ENCODE measurements at regions of chr1 and their contacts with region 1.

Region 1: GRCh38 chr1:220810179-220810653 is 23.5 kb downstream of the MTARC1 start:
- DNase-seq: no peak
- H3K4me3 ChIP-seq: peak overlapping the region; percentile 44
- CTCF ChIP-seq: peak; percentile 95

Region 2: DNA sequence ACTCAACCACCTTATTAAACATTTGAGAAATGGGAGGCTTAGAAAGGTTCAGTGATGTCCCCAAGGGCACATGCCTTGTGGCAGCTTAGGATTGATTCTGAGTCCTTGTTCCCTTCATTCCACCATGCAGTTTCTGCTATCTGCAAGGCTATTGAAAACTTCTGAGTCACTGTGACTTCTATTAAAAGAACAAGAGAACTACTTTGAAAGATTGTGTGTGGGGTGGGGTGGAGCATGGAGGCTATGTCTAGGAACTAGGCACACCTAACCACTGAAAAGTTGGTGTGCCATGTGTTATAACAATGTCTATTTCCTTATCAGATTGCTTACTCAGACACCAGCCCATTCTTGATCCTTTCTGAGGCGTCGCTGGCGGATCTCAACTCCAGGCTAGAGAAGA is 12.7 kb before region 1 on chr1:
- CTCF ChIA-PET with region 1: interaction called, 31 read pairs
- POLR2A ChIA-PET with region 1: no interaction called
- DNase-seq: no peak
- H3K4me3 ChIP-seq: no peak overlapping the region
- CTCF ChIP-seq: no peak

Region 3: GRCh38 chr1:220824031-220824989 is 14.1 kb after region 1 on chr1:
- CTCF ChIA-PET with region 1: interaction called, 19 read pairs
- POLR2A ChIA-PET with region 1: no interaction called
- DNase-seq: no peak
- H3K4me3 ChIP-seq: no peak overlapping the region
- CTCF ChIP-seq: no peak

Region 4: GRCh38 chr1:220841293-220841692 is 31.1 kb after region 1 on chr1:
- CTCF ChIA-PET with region 1: interaction called, 10 read pairs
- POLR2A ChIA-PET with region 1: no interaction called
- DNase-seq: no peak
- H3K4me3 ChIP-seq: no peak overlapping the region
- CTCF ChIP-seq: no peak

Region 5: DNA sequence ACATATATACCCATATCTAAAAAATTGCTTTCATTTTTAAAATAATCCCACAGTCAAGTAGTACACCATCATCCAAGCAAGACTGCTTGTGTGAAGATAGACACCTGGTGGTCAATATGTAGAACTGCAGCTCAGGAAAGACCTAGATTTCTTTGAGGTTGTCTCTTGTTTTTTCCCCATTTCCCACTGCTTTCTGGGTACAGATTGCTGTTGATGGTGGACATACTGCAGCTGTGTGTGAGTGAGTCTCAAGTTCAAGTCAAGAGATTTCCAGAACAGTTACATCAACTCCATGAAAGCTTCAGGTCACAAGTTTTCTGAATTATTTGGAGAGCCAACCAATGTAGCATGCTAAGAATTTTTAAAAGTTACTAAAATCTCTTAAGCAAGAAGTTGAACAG is 625.3 kb after region 1 on chr1:
- CTCF ChIA-PET with region 1: interaction called, 38 read pairs
- POLR2A ChIA-PET with region 1: no interaction called
- DNase-seq: no peak
- H3K4me3 ChIP-seq: no peak overlapping the region
- CTCF ChIP-seq: peak; percentile 78

Measured in AG04449 (cell line).